CD8-positive, alpha-beta T cell (primary cell): ENCODE measurements at regions of chr2 and their contacts with region 1.

Region 1: GRCh38 chr2:74507145-74507925 is at the start of gene PCGF1:
- DNase-seq: peak; percentile 98 to 100 (median 99)
- ATAC-seq: peak; percentile 90
- H3K4me3 ChIP-seq: peak within 1 kb of the TSS; percentile 96 to 99
- H3K4me3 Mint-ChIP-seq: peak within 1 kb of the TSS; percentile 99
- H3K27ac ChIP-seq: peak within 1 kb of the TSS; percentile 85 to 100
- H3K27ac Mint-ChIP-seq: peak within 1 kb of the TSS; percentile 99
- H3K4me1 ChIP-seq: peaks cover 32% of the 10 kb centered on the region
- H3K4me1 Mint-ChIP-seq: peaks cover 54% of the 10 kb centered on the region
- H3K27me3 ChIP-seq: peaks cover 13 to 20% of the 10 kb centered on the region in 2 experiments
- H3K27me3 Mint-ChIP-seq: peaks cover 54% of the 10 kb centered on the region
- CTCF ChIP-seq: peak; percentile 3
- total RNA-seq, gene PCGF1: 18.6 to 22.9 TPM

Region 2: GRCh38 chr2:73926493-73927338 is 580.6 kb before region 1 on chr2 and contains the start of gene DGUOK:
- CTCF ChIA-PET with region 1: no interaction called
- POLR2A ChIA-PET with region 1: no interaction called
- intact Hi-C with region 1: loop called in 1 of 2 experiments (anchors 5 kb)
- DNase-seq: peak; percentile 90 to 100 (median 96)
- ATAC-seq: peak; percentile 96
- H3K4me3 ChIP-seq: peak within 1 kb of the TSS; percentile 70 to 72
- H3K4me3 Mint-ChIP-seq: peak within 1 kb of the TSS; percentile 88
- H3K27ac ChIP-seq: peak within 1 kb of the TSS; percentile 94
- H3K27ac Mint-ChIP-seq: peak within 1 kb of the TSS; percentile 99
- H3K4me1 ChIP-seq: peaks cover 45% of the 10 kb centered on the region
- H3K4me1 Mint-ChIP-seq: peaks cover 52% of the 10 kb centered on the region
- H3K27me3 ChIP-seq: no peaks in the 10 kb centered on the region
- H3K27me3 Mint-ChIP-seq: no peaks in the 10 kb centered on the region
- CTCF ChIP-seq: no peak
- total RNA-seq, gene DGUOK: 29.0 to 31.8 TPM

Region 3: DNA sequence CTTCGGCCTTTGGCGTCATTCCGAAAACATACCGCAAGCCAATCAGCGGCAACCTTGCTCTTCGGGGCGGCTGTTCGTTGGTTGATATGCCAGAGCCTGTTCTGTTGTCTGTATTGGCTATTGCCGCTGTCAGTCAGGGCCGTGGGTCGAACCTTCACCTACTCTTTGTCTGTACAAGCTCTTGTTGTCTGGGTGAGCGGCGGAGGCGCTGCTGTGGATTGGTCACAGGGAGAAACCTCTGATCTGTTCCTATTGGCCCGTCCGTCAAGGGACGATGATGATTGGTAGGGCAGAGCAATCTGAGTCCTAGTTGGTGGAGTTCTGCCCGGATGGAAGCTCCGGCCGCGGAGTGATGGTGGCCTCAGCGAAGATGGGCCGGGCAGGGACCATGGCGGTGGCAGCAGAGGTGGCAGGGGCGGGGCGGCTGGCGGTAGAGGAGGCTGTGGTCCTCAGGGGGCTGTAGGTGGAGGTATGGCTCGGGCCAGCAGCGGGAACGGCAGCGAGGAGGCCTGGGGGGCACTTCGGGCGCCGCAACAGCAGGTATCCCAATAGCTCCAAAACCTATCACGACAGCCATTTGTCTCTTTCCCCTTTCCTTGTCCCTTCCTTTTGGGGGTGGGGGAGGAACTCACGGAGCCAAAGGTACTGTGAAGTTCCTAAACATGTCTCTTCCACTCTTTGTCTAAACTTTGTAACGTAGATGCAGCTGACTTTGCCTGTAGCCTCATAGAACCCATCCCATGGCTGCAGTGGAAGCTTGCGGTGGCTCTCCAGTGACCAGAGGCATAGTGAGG is 49.0 kb before region 1 on chr2 and contains the start of gene WBP1:
- CTCF ChIA-PET with region 1: interaction called, 3 read pairs
- POLR2A ChIA-PET with region 1: interaction called, 11 read pairs
- intact Hi-C with region 1: loop called (anchors 1 kb)
- DNase-seq: peak; percentile 96 to 100 (median 98)
- ATAC-seq: peak; percentile 77
- H3K4me3 ChIP-seq: peak within 1 kb of the TSS; percentile 84 to 95
- H3K4me3 Mint-ChIP-seq: peak within 1 kb of the TSS; percentile 97
- H3K27ac ChIP-seq: peak within 1 kb of the TSS; percentile 93 to 100
- H3K27ac Mint-ChIP-seq: peak within 1 kb of the TSS; percentile 99
- H3K4me1 ChIP-seq: peaks cover 34% of the 10 kb centered on the region
- H3K4me1 Mint-ChIP-seq: peaks cover 57% of the 10 kb centered on the region
- H3K27me3 ChIP-seq: no peaks in the 10 kb centered on the region
- H3K27me3 Mint-ChIP-seq: no peaks in the 10 kb centered on the region
- CTCF ChIP-seq: no peak
- total RNA-seq, gene WBP1: 68.5 to 70.6 TPM

Region 4: GRCh38 chr2:74553892-74554645 is 46.7 kb after region 1 on chr2 and contains the start of gene LOXL3:
- CTCF ChIA-PET with region 1: no interaction called
- POLR2A ChIA-PET with region 1: no interaction called
- intact Hi-C with region 1: loop called in 1 of 2 experiments (anchors 1 kb)
- DNase-seq: peak in 6 of 9 experiments; percentile 58 to 87 (median 70)
- ATAC-seq: peak; percentile 63
- H3K4me3 ChIP-seq: peak within 1 kb of the TSS; percentile 97 to 100
- H3K4me3 Mint-ChIP-seq: peak within 1 kb of the TSS; percentile 91
- H3K27ac ChIP-seq: peak within 1 kb of the TSS; percentile 66 to 77
- H3K27ac Mint-ChIP-seq: peak within 1 kb of the TSS; percentile 84
- H3K4me1 ChIP-seq: peaks cover 17% of the 10 kb centered on the region
- H3K4me1 Mint-ChIP-seq: peaks cover 10% of the 10 kb centered on the region
- H3K27me3 ChIP-seq: peaks cover 2 to 11% of the 10 kb centered on the region in 2 experiments
- H3K27me3 Mint-ChIP-seq: peaks cover 19% of the 10 kb centered on the region
- CTCF ChIP-seq: no peak
- total RNA-seq, gene LOXL3: not detected

Region 5: GRCh38 chr2:74653985-74654882 is 146.9 kb after region 1 on chr2 and contains the start of gene SEMA4F:
- CTCF ChIA-PET with region 1: no interaction called
- POLR2A ChIA-PET with region 1: no interaction called
- intact Hi-C with region 1: loop called (anchors 10 kb)
- DNase-seq: peak; percentile 85 to 96 (median 93)
- ATAC-seq: peak; percentile 99
- H3K4me3 ChIP-seq: peak within 1 kb of the TSS; percentile 76 to 78
- H3K4me3 Mint-ChIP-seq: peak within 1 kb of the TSS; percentile 90
- H3K27ac ChIP-seq: peak within 1 kb of the TSS in 1 of 2 experiments; percentile 48
- H3K27ac Mint-ChIP-seq: peak within 1 kb of the TSS; percentile 79
- H3K4me1 ChIP-seq: peaks cover 12% of the 10 kb centered on the region
- H3K4me1 Mint-ChIP-seq: peaks cover 19% of the 10 kb centered on the region
- H3K27me3 ChIP-seq: no peaks in the 10 kb centered on the region
- H3K27me3 Mint-ChIP-seq: peaks cover 11% of the 10 kb centered on the region
- CTCF ChIP-seq: no peak
- total RNA-seq, gene SEMA4F: 4.6 to 5.9 TPM